Activated CD4-positive, alpha-beta memory T cell treated with anti-CD3 and anti-CD28 coated beads for 36 hours (primary cell): ENCODE measurements at regions of chr20 and their contacts with region 1.

Region 1: DNA sequence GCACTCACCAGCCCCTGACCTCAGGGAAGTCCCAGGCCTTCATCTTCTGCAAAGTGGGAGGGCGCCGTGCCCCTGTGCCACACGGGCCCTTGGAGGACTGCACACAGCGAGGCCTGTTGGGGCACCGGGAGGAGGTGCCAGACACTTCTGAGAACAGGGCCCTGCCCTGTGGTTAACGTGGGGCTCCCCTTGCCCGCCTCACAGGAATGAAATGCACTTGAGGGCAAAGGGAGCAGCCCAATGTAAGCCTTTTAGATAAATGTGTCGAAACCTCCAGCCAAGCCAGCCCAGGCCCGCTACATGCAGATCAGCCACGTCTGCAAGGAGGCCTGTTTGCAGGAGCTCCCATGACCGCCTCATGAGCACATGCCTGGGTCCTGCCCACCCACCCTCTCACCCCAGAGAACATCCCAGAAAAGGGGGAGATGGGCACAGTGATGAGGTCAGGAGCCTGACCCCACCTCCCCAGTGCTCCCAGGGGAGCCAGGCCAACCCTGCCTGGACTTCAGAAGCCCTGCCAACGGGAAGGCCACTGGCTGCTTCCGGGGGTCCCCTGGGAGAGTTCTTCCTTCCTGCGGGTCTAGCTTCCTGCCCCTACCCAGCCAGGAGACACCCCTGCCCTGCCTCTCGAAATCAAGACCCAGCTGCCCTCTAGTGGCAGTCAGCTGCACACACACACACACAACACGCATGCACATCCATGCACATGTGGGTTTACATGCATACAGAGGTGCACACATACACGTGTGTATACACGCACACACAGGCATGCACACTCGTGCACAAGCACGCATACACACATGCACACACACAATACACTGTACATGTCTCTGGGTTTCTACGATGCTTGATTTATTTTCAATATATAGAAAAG is 178.7 kb downstream of the TAF4 start:
- DNase-seq: peak; percentile 46
- H3K4me3 Mint-ChIP-seq: no peak overlapping the region
- H3K27ac Mint-ChIP-seq: no peak overlapping the region
- H3K4me1 Mint-ChIP-seq: peaks cover 2% of the 10 kb centered on the region
- H3K27me3 Mint-ChIP-seq: peaks cover 8% of the 10 kb centered on the region

Region 2: GRCh38 chr20:61407561-61407960 is 479.4 kb before region 1 on chr20:
- CTCF ChIA-PET with region 1: no interaction called
- POLR2A ChIA-PET with region 1: no interaction called
- intact Hi-C with region 1: no loop called
- DNase-seq: no peak
- H3K4me3 Mint-ChIP-seq: no peak overlapping the region
- H3K27ac Mint-ChIP-seq: no peak overlapping the region
- H3K4me1 Mint-ChIP-seq: no peaks in the 10 kb centered on the region
- H3K27me3 Mint-ChIP-seq: no peaks in the 10 kb centered on the region

Region 3: DNA sequence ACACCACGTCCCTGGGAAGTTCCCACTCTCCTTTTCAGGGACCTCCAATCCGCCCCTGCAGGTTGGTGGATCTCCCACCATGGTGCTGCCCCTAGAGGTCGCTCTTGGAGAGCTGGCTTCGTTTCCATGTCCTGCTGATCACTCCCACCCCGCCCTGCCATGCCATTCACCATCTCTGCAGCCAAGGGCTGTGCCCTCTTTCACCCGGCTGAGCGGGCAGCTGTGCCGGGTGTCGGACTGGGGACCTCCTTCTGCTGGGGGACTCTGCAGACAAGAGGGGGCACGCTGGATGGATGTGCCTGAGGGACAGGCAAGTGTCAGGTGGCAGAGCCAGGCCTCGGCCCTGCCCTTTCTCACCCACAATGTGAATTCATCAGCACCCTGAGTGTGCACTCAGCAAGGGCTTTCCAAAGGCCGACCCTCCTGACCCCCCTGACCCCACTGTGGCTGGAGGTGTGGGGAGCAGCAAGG is 287.9 kb before region 1 on chr20:
- CTCF ChIA-PET with region 1: no interaction called
- POLR2A ChIA-PET with region 1: no interaction called
- intact Hi-C with region 1: loop called (anchors 5 kb)
- DNase-seq: no peak
- H3K4me3 Mint-ChIP-seq: no peak overlapping the region
- H3K27ac Mint-ChIP-seq: no peak overlapping the region
- H3K4me1 Mint-ChIP-seq: no peaks in the 10 kb centered on the region
- H3K27me3 Mint-ChIP-seq: no peaks in the 10 kb centered on the region

Region 4: GRCh38 chr20:61773081-61773631 is 113.8 kb before region 1 on chr20:
- CTCF ChIA-PET with region 1: no interaction called
- POLR2A ChIA-PET with region 1: no interaction called
- intact Hi-C with region 1: no loop called
- DNase-seq: no peak
- H3K4me3 Mint-ChIP-seq: no peak overlapping the region
- H3K27ac Mint-ChIP-seq: no peak overlapping the region
- H3K4me1 Mint-ChIP-seq: no peaks in the 10 kb centered on the region
- H3K27me3 Mint-ChIP-seq: no peaks in the 10 kb centered on the region